ENCODE measurements at regions of chr11 and their contacts with region 1.

Region 1: DNA sequence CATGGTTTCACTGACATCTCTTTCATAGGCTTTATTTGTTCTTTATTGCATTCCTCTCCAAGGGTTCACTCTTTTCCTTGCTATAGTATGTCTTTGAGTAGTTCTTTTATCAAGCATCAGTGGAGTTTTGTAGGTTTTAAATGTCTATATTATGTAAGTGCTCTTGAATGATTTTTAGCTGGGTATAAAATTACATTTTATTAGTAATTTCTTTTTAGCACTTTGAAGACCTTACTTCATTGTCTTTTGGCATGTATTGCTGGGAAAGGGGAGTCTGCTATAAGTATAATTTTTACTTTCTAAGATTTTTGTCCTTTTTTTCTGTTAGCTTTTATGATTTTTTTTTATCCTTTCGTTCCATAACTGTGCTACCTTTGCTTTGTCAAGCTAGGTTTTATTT is 25.5 kb upstream of the CAT start:
- DNase-seq: no peak
- H3K4me3 ChIP-seq: no peak overlapping the region
- H3K27ac ChIP-seq: no peak overlapping the region
- H3K4me1 ChIP-seq: peaks cover 4% of the 10 kb centered on the region
- H3K27me3 ChIP-seq: no peaks in the 10 kb centered on the region
- CTCF ChIP-seq: no peak

Region 2: GRCh38 chr11:34423300-34424072 is 10.2 kb after region 1 on chr11:
- CTCF ChIA-PET with region 1: interaction called, 14 read pairs
- POLR2A ChIA-PET with region 1: no interaction called
- intact Hi-C with region 1: no loop called
- DNase-seq: peak; percentile 49 to 65
- H3K4me3 ChIP-seq: no peak overlapping the region
- H3K27ac ChIP-seq: no peak overlapping the region
- H3K4me1 ChIP-seq: peaks cover 47% of the 10 kb centered on the region
- H3K27me3 ChIP-seq: no peaks in the 10 kb centered on the region
- CTCF ChIP-seq: no peak

Region 3: GRCh38 chr11:34565417-34566207 is 152.3 kb after region 1 on chr11:
- CTCF ChIA-PET with region 1: no interaction called
- POLR2A ChIA-PET with region 1: no interaction called
- intact Hi-C with region 1: no loop called
- DNase-seq: no peak
- H3K4me3 ChIP-seq: no peak overlapping the region
- H3K27ac ChIP-seq: peak overlapping the region; percentile 83
- H3K4me1 ChIP-seq: peaks cover 35% of the 10 kb centered on the region
- H3K27me3 ChIP-seq: no peaks in the 10 kb centered on the region
- CTCF ChIP-seq: peak; percentile 77